PC-3 (cell line): ENCODE measurements at regions of chr1 and their contacts with region 1.

Region 1: GRCh38 chr1:52702886-52703787 is 5.0 kb upstream of the COA7 start:
- DNase-seq: peak; percentile 94
- ATAC-seq: peak; percentile 87
- H3K4me3 ChIP-seq: peak overlapping the region; percentile 64
- H3K27ac ChIP-seq: peak overlapping the region; percentile 40; the same call in 1 of the 2 replicates
- H3K4me1 ChIP-seq: peaks cover 27% of the 10 kb centered on the region
- H3K27me3 ChIP-seq: no peaks in the 10 kb centered on the region
- CTCF ChIP-seq: no peak

Region 2: DNA sequence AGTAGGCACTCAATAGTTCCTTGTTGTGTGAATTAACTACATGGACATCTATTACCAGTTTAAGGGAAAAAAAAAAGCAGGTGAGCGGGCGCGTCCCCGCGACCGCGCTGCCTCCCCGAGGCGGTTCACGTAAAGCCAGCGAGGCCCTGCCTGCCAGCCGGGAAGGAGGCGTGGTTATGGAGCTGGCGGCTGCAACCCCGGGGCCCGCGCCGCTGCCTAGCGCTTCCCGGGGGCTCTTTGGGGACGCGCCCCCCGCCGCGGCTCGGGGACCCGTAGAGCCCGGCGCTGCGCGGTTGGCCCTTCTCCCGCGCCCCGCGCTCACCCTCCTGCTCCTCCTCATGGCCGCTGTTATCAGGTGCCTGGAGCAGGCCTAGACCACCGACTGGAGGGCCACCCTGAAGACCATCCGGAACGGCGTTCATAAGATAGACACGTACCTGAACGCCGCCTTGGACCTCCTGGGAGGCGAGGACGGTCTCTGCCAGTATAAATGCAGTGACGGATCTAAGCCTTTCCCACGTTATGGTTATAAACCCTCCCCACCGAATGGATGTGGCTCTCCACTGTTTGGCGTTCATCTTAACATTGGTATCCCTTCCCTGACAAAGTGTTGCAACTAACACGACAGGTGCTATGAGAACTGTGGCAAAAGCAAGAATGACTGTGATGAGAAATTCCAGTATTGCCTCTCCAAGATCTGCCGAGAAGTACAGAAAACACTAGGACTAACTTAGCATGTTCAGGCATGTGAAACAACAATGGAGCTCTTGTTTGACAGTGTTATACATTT is 334.6 kb before region 1 on chr1:
- CTCF ChIA-PET with region 1: no interaction called
- POLR2A ChIA-PET with region 1: no interaction called
- intact Hi-C with region 1: no loop called
- DNase-seq: peak; percentile 76
- ATAC-seq: peak; percentile 33
- H3K4me3 ChIP-seq: peak overlapping the region; percentile 73
- H3K27ac ChIP-seq: no peak overlapping the region
- H3K4me1 ChIP-seq: peaks cover 20% of the 10 kb centered on the region
- H3K27me3 ChIP-seq: no peaks in the 10 kb centered on the region
- CTCF ChIP-seq: peak; percentile 28; the same call in 1 of the 2 replicates

Region 3: GRCh38 chr1:52482326-52483004 is 220.7 kb before region 1 on chr1:
- CTCF ChIA-PET with region 1: no interaction called
- POLR2A ChIA-PET with region 1: no interaction called
- intact Hi-C with region 1: no loop called
- DNase-seq: no peak
- ATAC-seq: no peak
- H3K4me3 ChIP-seq: no peak overlapping the region
- H3K27ac ChIP-seq: no peak overlapping the region
- H3K4me1 ChIP-seq: no peaks in the 10 kb centered on the region
- H3K27me3 ChIP-seq: no peaks in the 10 kb centered on the region
- CTCF ChIP-seq: no peak

Region 4: DNA sequence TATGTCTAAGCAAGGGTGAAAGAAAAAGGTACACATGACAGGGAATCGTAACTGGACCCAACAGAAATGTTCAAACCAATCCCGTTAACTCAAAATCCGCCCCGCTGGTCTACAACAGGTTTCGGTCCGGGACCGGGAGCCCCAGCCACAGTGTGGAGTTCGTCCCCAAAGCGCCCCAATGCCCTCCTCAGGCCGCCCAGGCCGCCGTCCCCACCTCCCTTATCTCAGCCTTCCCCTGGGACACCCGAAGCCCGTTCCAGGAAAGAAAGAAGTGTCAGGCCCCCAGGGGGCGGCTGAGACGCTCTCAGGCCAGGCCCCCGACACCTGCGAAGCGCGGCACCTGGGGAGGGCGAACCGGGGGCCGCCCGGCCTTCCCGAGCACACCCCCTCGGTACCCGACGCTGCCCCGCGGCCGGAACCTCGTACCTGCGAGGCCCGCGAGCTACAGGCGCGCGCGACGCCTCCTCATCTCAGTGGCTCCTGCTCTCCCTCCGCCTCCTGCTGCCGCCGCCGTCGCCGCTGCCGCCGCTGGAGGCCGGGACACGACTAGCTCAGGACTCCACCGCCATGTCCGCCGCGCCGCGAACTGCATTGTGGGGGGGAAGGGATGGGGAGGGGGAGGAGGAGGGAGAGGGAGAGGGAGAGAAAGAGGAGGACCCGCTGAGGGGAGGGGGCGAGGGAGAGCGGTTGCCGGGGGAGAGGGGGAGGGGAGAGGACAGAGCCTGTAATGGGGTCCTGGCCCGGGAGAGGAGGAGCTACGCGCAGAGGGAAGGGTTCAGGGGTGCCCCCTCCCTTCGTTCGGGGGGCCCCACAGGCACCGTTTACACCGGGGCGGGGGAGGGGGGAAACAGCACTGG is 150.4 kb before region 1 on chr1 and contains the start of gene TUT4:
- CTCF ChIA-PET with region 1: no interaction called
- POLR2A ChIA-PET with region 1: interaction called, 11 read pairs
- intact Hi-C with region 1: no loop called
- DNase-seq: peak; percentile 66
- ATAC-seq: peak; percentile 58
- H3K4me3 ChIP-seq: peak within 1 kb of the TSS; percentile 82
- H3K27ac ChIP-seq: peak within 1 kb of the TSS; percentile 48
- H3K4me1 ChIP-seq: peaks cover 11% of the 10 kb centered on the region
- H3K27me3 ChIP-seq: no peaks in the 10 kb centered on the region
- CTCF ChIP-seq: peak; percentile 12; the same call in 1 of the 2 replicates
- total RNA-seq, gene TUT4: 36.1 and 37.4 TPM in 2 replicates

Region 5: GRCh38 chr1:52574594-52574993 is 128.5 kb before region 1 on chr1:
- CTCF ChIA-PET with region 1: no interaction called
- POLR2A ChIA-PET with region 1: no interaction called
- intact Hi-C with region 1: no loop called
- DNase-seq: peak; percentile 94
- ATAC-seq: peak; percentile 100
- H3K4me3 ChIP-seq: no peak overlapping the region
- H3K27ac ChIP-seq: peak overlapping the region; percentile 50
- H3K4me1 ChIP-seq: peaks cover 17% of the 10 kb centered on the region
- H3K27me3 ChIP-seq: no peaks in the 10 kb centered on the region
- CTCF ChIP-seq: no peak

Region 6: DNA sequence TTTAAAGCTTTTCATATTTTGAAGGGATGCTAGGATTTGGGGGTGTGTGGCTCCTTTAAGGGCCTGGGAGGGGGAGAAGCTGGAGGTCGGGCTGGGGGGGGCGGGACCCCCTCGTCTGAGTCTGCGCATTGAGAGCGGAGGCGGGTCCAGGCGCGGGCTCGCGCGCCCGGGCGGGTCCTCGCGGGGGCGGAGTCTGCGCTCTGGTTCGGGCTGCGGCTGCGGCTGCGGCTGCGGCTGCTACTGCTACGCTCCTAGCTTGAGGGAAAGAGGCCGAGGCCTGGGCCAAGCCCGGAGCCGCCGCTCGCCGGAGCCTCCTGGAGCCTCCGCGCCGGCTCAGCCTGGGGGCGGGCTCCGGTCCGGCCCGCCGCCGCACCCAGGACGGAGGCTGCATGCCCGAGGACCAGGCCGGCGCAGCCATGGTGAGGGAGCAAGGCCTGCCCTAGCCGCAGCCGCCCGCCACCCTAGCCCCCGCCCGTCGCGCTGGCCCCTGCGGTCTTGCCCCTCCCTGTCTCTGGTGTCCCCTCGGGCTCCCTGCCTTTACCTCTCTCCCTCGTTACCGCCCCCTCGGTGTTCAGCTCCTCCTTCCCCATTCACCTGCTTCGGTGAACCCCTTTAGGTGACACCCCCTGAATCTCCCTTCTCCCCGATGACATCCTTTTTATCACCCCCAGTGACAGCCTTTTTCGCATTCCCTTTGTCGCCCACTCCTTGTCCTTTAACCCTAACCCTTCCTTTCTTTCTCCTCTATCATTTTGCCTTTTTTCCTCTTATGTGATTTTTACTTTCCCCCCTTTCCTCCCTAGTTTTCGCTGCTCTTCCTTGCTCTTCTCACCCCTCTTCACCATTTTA is 23.4 kb after region 1 on chr1 and contains the start of gene ZYG11B:
- CTCF ChIA-PET with region 1: no interaction called
- POLR2A ChIA-PET with region 1: no interaction called
- intact Hi-C with region 1: loop called (anchors 2 kb)
- DNase-seq: peak; percentile 83
- ATAC-seq: peak; percentile 93
- H3K4me3 ChIP-seq: peak within 1 kb of the TSS; percentile 90
- H3K27ac ChIP-seq: no peak within 1 kb of the TSS
- H3K4me1 ChIP-seq: peaks cover 17% of the 10 kb centered on the region
- H3K27me3 ChIP-seq: no peaks in the 10 kb centered on the region
- CTCF ChIP-seq: no peak
- total RNA-seq, gene ZYG11B: 19.8 and 23.4 TPM in 2 replicates

Region 7: GRCh38 chr1:52748119-52748518 is 45.0 kb after region 1 on chr1:
- CTCF ChIA-PET with region 1: no interaction called
- POLR2A ChIA-PET with region 1: no interaction called
- intact Hi-C with region 1: loop called (anchors 1 kb)
- DNase-seq: peak; percentile 38
- ATAC-seq: no peak
- H3K4me3 ChIP-seq: no peak overlapping the region
- H3K27ac ChIP-seq: no peak overlapping the region
- H3K4me1 ChIP-seq: peaks cover 4% of the 10 kb centered on the region; the same call in 1 of the 2 replicates
- H3K27me3 ChIP-seq: no peaks in the 10 kb centered on the region
- CTCF ChIP-seq: peak; percentile 54; the same call in 1 of the 2 replicates

Region 8: GRCh38 chr1:52825868-52826267 is 122.7 kb after region 1 on chr1:
- CTCF ChIA-PET with region 1: no interaction called
- POLR2A ChIA-PET with region 1: no interaction called
- intact Hi-C with region 1: loop called (anchors 5 kb)
- DNase-seq: peak; percentile 57
- ATAC-seq: peak; percentile 85
- H3K4me3 ChIP-seq: no peak overlapping the region
- H3K27ac ChIP-seq: no peak overlapping the region
- H3K4me1 ChIP-seq: no peaks in the 10 kb centered on the region
- H3K27me3 ChIP-seq: no peaks in the 10 kb centered on the region
- CTCF ChIP-seq: peak; percentile 66

Region 9: GRCh38 chr1:52920791-52921291 is 217.7 kb after region 1 on chr1:
- CTCF ChIA-PET with region 1: no interaction called
- POLR2A ChIA-PET with region 1: no interaction called
- intact Hi-C with region 1: loop called (anchors 1 kb)
- DNase-seq: peak; percentile 31
- ATAC-seq: peak; percentile 69
- H3K4me3 ChIP-seq: peak overlapping the region; percentile 98
- H3K27ac ChIP-seq: peak overlapping the region; percentile 52
- H3K4me1 ChIP-seq: peaks cover 23% of the 10 kb centered on the region
- H3K27me3 ChIP-seq: no peaks in the 10 kb centered on the region
- CTCF ChIP-seq: no peak

Region 10: GRCh38 chr1:53182111-53182593 is 479.0 kb after region 1 on chr1:
- CTCF ChIA-PET with region 1: no interaction called
- POLR2A ChIA-PET with region 1: no interaction called
- intact Hi-C with region 1: loop called (anchors 2 kb)
- DNase-seq: peak; percentile 95
- ATAC-seq: peak; percentile 76
- H3K4me3 ChIP-seq: no peak overlapping the region
- H3K27ac ChIP-seq: no peak overlapping the region
- H3K4me1 ChIP-seq: peaks cover 27% of the 10 kb centered on the region
- H3K27me3 ChIP-seq: no peaks in the 10 kb centered on the region
- CTCF ChIP-seq: peak; percentile 95